ENCODE measurements at regions of chr20 and their contacts with region 1.

Region 1: DNA sequence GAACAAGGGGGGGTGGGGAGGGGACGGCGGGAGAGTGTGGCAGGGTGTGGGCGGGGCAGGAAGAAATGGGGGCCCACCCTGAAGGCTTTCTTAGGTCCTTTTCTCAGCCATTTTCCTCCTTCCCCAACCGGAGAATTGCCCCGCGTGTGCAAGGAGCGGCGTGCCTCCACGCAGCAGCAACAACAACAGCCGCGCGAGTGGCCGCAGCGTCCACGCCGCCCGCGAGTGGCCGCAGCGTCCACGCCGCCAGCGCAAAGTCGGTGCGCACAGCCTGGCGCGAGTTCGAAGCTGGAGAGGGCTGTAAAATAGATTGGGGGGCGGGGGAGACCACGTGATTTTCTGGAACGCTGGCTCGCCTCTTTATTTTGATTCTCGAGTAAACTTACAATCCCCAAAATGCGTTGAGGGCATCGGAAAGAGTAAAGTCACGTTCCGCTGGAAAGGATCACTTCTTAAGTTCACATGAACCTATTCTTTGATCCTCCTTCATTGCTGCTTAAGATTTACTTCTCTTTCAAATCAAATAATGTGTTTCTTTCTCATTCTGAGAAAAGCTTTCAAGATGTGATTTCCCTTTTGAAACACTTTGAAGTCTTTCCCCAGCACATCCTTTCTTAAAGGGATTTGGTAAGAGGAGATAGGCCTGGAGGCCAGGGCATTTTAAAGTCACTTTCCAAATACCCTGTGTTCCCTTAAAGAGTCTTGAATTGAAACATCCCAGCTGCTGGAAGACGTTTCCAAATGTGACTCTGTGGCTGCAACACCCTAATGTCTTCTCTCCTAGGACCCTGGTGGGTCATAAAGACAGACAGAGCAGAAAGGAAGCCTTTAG is 66.7 kb upstream of the ZNF217 start:
- DNase-seq: peak; percentile 82
- H3K4me3 Mint-ChIP-seq: peak overlapping the region; percentile 84
- H3K27ac Mint-ChIP-seq: peak overlapping the region; percentile 93
- H3K4me1 Mint-ChIP-seq: peaks cover 54% of the 10 kb centered on the region
- H3K27me3 Mint-ChIP-seq: no peaks in the 10 kb centered on the region

Region 2: GRCh38 chr20:53594068-53595017 is 66.0 kb before region 1 on chr20:
- intact Hi-C with region 1: loop called (anchors 1 kb)
- DNase-seq: peak; percentile 99
- H3K4me3 Mint-ChIP-seq: peak overlapping the region; percentile 86
- H3K27ac Mint-ChIP-seq: peak overlapping the region; percentile 93
- H3K4me1 Mint-ChIP-seq: peaks cover 45% of the 10 kb centered on the region
- H3K27me3 Mint-ChIP-seq: no peaks in the 10 kb centered on the region

Region 3: GRCh38 chr20:53677447-53678314 is 17.4 kb after region 1 on chr20:
- intact Hi-C with region 1: loop called (anchors 2 kb)
- DNase-seq: peak; percentile 80
- H3K4me3 Mint-ChIP-seq: peak overlapping the region; percentile 68
- H3K27ac Mint-ChIP-seq: peak overlapping the region; percentile 86
- H3K4me1 Mint-ChIP-seq: peaks cover 17% of the 10 kb centered on the region
- H3K27me3 Mint-ChIP-seq: no peaks in the 10 kb centered on the region